ENCODE measurements at regions of chr20 and their contacts with region 1.

Region 1: GRCh38 chr20:20580139-20580538 is 132.3 kb downstream of the RALGAPA2 start:
- H3K4me3 ChIP-seq: no peak overlapping the region
- H3K27ac ChIP-seq: no peak overlapping the region
- H3K4me1 ChIP-seq: no peaks in the 10 kb centered on the region
- CTCF ChIP-seq: no peak

Region 2: GRCh38 chr20:20593447-20594170 is 13.5 kb after region 1 on chr20:
- CTCF ChIA-PET with region 1: interaction called, 16 read pairs
- POLR2A ChIA-PET with region 1: no interaction called
- H3K4me3 ChIP-seq: no peak overlapping the region
- H3K27ac ChIP-seq: no peak overlapping the region
- H3K4me1 ChIP-seq: no peaks in the 10 kb centered on the region
- CTCF ChIP-seq: peak; percentile 40